Aorta (tissue), 5 donors: ENCODE measurements at regions of chr13 and their contacts with region 1.

Region 1: GRCh38 chr13:35157143-35157755 is 215.2 kb downstream of the NBEA start:
- DNase-seq: no peak
- ATAC-seq: peak; percentile 78
- H3K4me3 ChIP-seq: no peak overlapping the region
- H3K27ac ChIP-seq: no peak overlapping the region
- H3K4me1 ChIP-seq: no peaks in the 10 kb centered on the region
- H3K27me3 ChIP-seq: no peaks in the 10 kb centered on the region

Region 2: DNA sequence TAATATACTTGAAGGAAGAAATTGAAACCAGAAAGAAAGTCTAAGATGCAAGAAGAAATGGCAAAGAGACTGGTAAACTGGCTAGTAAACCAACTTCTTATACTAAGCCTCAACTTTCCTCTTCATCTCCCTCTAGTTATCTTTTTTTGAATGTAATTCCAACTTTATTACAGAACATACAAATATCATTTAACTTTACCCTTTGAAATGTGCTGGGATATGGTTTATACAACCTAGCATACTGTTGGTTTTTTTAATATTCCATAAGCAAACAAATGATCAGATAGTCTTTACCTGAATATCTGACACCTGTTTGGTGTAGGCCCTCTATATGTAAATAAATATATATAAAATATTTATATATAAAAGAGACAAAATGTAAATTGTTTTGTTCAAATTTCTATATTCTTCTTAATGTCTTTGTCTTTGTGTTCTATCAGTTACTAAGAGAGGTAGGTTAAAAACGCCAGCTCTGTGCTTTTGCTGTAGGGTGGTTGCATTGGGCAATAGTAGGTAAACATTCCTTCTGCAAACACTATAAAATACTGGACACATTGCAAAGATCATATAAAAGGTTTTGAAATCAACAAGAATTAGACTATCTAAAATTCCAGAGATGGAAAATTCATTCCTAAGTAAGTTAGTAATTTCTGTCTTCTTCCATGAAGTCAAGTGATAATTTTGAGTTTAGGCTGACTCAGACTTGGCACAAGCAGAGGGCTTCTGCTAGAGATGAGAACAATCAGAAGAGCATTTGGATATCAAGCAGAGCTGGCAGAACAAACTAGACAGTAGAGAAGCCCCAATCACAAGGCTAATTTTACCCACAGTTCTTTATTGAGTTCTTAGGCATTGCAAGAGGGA is 956.0 kb before region 1 on chr13:
- intact Hi-C with region 1: loop called in 1 of 2 experiments (anchors 5 kb)
- DNase-seq: no peak
- ATAC-seq: no peak
- H3K4me3 ChIP-seq: no peak overlapping the region
- H3K27ac ChIP-seq: no peak overlapping the region
- H3K4me1 ChIP-seq: no peaks in the 10 kb centered on the region
- H3K27me3 ChIP-seq: no peaks in the 10 kb centered on the region

Region 3: DNA sequence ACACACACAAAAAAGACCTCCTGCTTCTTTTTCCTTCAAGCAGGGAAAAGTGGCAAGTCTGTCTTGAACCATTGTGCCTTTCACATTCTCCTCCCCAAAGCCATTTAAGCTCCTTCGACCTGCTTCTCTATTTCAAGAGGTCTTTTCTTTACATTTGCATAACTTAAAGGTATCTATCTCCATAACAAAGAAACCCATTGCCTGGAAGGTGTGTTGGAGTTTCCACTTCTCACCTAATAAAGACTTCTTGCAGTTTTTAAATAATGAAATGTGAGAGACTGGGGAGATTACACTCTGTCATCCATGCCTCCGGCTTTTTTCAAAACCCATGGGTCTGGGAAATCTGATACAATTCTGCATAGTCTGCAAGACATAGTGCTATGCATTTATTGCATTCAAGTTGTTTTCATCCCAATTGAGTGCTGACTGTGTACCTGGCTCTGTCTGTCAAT is 256.9 kb before region 1 on chr13:
- intact Hi-C with region 1: no loop called
- DNase-seq: no peak
- ATAC-seq: no peak
- H3K4me3 ChIP-seq: no peak overlapping the region
- H3K27ac ChIP-seq: no peak overlapping the region
- H3K4me1 ChIP-seq: no peaks in the 10 kb centered on the region
- H3K27me3 ChIP-seq: no peaks in the 10 kb centered on the region